ENCODE measurements at regions of chr5 and their contacts with region 1.

Region 1: DNA sequence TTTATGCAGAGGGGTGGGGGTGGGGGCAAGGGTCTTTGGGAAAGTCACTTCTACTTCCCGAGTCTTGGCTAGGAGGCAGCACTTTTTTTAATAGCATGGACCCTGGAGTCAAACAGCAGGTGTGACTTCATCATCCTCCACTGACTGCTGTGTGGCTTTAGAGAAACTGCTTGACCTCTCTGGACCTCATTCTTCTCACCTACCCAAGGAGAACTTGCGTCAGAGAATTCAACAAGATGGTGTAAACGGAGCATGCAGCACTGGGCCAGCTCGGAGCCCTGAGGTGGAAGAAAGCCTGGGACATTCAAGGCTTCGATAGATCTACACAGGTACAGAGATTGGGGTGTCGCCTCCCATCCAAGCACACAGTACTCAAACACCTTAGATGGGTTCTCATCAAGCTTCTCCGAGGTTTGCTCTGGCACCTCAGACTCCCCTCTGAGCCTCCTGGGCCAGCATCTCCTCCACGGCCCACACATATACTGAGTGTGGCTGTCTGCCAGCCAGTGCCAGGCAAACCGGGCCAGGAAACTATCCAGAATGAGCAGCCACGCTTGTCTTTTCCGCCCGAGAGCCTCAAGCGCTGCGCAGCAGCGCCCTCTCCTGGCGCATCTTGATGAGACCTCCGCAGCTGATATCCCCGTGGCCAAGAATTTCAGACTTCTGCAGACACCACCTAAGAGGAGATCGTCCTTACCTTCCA is 4.6 kb upstream of the SLC25A48 start:
- DNase-seq: peak; percentile 69
- ATAC-seq: peak; percentile 50 to 70

Region 2: GRCh38 chr5:135466178-135467050 is 363.4 kb before region 1 on chr5:
- intact Hi-C with region 1: loop called in 1 of 2 experiments (anchors 10 kb)
- DNase-seq: peak; percentile 81
- ATAC-seq: peak; percentile 95 to 96

Region 3: DNA sequence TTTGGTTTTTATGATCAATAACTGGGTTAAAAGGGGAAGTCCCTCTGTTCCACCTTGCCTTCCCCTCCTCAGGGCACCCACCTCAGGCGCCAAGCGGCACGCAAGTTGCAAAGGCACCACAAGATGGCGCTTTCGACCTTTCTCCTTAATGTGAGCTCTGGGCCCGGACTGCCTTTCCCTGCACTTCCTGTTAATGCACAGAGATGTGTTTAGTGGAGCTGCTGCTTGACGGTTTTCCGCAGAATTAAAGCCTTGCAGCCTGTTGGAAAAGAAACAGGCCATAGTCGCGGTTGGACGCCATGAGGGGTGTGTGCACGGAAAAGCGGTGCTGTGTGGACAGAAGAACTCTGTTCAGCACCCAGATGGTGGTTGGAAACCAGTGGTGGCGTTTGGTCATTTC is 269.0 kb before region 1 on chr5:
- intact Hi-C with region 1: loop called (anchors 2 kb)
- DNase-seq: peak; percentile 78
- ATAC-seq: peak; percentile 84 to 91

Region 4: DNA sequence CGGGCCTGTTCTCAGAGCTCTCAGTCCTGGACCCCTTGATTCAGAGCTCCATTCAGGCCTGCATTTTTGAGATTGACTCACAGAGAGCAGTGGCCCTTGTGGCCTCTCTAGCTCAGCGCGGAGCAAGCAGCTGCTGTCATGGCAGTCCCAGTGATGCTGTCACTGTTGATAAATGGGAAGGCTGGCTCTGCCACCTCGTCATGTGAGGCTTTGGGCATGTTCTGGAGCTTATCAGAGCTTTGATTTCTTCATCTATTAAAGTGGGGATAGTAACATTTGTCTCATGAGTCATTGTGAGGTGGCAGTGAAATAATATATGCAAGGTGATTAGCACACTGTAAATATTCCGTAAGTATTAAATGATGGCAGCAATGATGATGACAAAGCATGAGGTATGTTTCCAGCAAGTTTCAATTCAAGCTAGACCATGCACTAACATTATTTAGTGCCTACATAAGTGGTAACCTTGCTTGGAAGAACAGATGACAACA is 124.6 kb before region 1 on chr5:
- intact Hi-C with region 1: no loop called
- DNase-seq: no peak
- ATAC-seq: peak in 1 of 2 donors; percentile 47

Region 5: DNA sequence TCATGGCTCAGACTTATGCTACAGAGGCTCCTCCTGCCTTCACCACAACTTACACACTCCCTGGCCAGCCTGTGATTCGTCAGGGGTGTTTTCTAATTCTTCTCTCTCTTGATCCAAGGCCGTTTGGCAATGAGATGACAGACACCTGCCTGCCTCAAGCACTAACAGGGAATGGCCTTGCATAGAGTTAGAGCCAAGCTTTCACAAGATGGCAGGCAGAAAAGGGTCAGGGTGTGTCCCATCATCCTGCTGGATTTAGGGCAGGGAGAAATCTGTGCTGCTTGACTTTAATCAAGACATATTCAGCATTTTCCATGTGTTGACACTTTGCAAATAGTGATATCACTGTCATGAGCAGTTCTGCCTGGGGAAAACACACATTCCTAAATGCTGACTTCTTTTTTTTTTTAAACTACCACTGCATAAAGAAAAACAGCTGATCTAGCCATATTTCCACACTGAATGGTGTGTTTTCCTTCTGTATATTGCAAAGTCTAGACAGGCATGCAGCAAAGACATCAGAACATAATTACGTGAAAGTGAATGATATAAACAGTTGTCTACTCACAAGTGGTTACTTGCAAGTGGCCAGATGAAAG is 90.3 kb before region 1 on chr5:
- intact Hi-C with region 1: loop called in 1 of 2 experiments (anchors 5 kb)
- DNase-seq: no peak
- ATAC-seq: peak in 1 of 2 donors; percentile 23

Region 6: GRCh38 chr5:136080113-136080482 is 250.3 kb after region 1 on chr5:
- intact Hi-C with region 1: no loop called
- DNase-seq: no peak
- ATAC-seq: peak in 1 of 2 donors; percentile 6